Activated B cell treated with CpG ODN at 0.5 μM for 24 hours (primary cell): ENCODE measurements at regions of chr19 and their contacts with region 1.

Region 1: GRCh38 chr19:56314562-56315077 is at the start of gene ZSCAN5A:
- DNase-seq: peak; percentile 93
- ATAC-seq: peak; percentile 77
- H3K4me3 Mint-ChIP-seq: peak within 1 kb of the TSS; percentile 96
- H3K27ac Mint-ChIP-seq: peak within 1 kb of the TSS; percentile 100
- H3K4me1 Mint-ChIP-seq: peaks cover 19% of the 10 kb centered on the region
- H3K27me3 Mint-ChIP-seq: no peaks in the 10 kb centered on the region
- CTCF ChIP-seq: no peak
- total RNA-seq, gene ZSCAN5A: 14.0 and 17.8 TPM in 2 replicates

Region 2: GRCh38 chr19:56080669-56081401 is 233.8 kb before region 1 on chr19:
- CTCF ChIA-PET with region 1: interaction called, 4 read pairs
- POLR2A ChIA-PET with region 1: no interaction called
- intact Hi-C with region 1: loop called (anchors 1 kb)
- DNase-seq: peak; percentile 70
- ATAC-seq: peak; percentile 82
- H3K4me3 Mint-ChIP-seq: peak overlapping the region; percentile 84
- H3K27ac Mint-ChIP-seq: peak overlapping the region; percentile 55
- H3K4me1 Mint-ChIP-seq: peaks cover 17% of the 10 kb centered on the region
- H3K27me3 Mint-ChIP-seq: no peaks in the 10 kb centered on the region
- CTCF ChIP-seq: no peak

Region 3: DNA sequence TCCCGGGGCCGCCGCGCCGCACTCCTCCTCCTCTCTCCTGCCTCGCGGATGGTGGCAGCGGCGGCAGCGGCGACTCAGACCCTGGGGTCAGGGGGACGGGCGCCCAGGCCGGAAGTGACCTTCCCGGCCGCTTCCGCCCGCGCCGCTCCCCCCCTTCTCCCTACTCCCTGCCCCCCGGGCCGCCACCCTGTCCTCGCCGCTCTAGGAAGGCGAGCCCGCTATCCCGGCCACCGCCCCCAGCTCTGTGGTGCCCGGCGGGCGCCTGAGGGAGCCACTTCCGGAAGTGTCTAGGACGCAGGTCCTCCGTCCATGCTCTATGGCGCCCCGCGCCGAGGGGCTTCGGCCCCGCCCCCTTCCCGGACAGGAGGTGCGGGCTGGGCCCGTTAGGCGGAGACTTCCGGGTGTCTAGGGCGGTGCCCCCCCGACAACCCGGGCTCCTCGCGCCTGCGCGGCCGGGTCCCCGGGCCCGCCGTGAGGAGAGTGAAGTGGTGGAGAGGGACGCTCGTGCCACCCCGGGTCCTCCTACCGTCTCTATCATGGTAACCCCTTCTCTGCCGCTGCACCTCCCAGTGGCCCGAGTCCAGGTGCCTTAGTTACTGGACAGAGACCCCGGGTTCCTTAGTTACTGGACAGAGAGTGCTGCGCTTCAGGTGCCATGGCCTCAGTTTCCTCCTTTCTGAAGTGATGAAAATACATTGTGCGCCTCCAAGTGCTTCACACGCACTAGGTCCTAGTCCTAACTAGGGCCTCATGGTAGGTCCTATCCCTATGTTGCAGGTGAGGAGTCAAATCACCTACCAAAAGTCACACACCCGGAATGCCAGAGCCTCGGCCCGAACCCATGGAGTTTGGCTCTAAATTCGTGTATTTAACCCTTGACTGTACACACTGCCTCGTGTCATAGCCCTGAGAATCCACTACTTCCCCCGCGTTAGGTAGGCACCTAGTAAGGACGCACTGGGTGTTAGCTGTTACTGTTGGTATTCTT is 193.1 kb before region 1 on chr19 and contains the start of gene ZNF787:
- CTCF ChIA-PET with region 1: no interaction called
- POLR2A ChIA-PET with region 1: no interaction called
- intact Hi-C with region 1: loop called (anchors 1 kb)
- DNase-seq: peak; percentile 99
- ATAC-seq: peak; percentile 87
- H3K4me3 Mint-ChIP-seq: peak within 1 kb of the TSS; percentile 91
- H3K27ac Mint-ChIP-seq: peak within 1 kb of the TSS; percentile 95
- H3K4me1 Mint-ChIP-seq: peaks cover 45% of the 10 kb centered on the region
- H3K27me3 Mint-ChIP-seq: no peaks in the 10 kb centered on the region
- CTCF ChIP-seq: no peak
- total RNA-seq, gene ZNF787: 40.8 and 42.3 TPM in 2 replicates

Region 4: DNA sequence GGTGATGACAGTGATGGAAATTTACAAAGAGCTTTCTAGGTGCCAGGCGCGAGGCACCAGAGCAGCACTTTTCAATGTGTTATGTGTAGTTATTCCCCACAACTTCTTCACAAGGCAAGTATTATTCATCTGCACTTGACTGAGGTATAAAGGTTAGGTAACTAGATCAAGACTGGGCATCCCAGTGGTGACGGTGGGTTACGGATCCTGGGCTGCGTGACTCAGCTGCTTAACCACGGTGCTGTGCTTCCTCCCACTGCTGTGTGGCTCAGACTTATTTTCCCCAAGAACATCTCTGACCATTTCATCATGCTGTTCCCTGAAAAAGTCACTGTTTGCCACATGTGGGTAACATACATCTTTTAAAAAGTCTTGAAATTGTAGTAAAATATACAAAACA is 22.8 kb before region 1 on chr19:
- CTCF ChIA-PET with region 1: no interaction called
- POLR2A ChIA-PET with region 1: no interaction called
- intact Hi-C with region 1: no loop called
- DNase-seq: no peak
- ATAC-seq: no peak
- H3K4me3 Mint-ChIP-seq: no peak overlapping the region
- H3K27ac Mint-ChIP-seq: no peak overlapping the region
- H3K4me1 Mint-ChIP-seq: no peaks in the 10 kb centered on the region
- H3K27me3 Mint-ChIP-seq: no peaks in the 10 kb centered on the region
- CTCF ChIP-seq: no peak

Region 5: GRCh38 chr19:56367829-56368711 is 53.5 kb after region 1 on chr19:
- CTCF ChIA-PET with region 1: no interaction called
- POLR2A ChIA-PET with region 1: interaction called, 10 read pairs
- intact Hi-C with region 1: no loop called
- DNase-seq: peak; percentile 79
- ATAC-seq: peak; percentile 99
- H3K4me3 Mint-ChIP-seq: peak overlapping the region; percentile 95
- H3K27ac Mint-ChIP-seq: peak overlapping the region; percentile 89
- H3K4me1 Mint-ChIP-seq: peaks cover 23% of the 10 kb centered on the region
- H3K27me3 Mint-ChIP-seq: no peaks in the 10 kb centered on the region
- CTCF ChIP-seq: no peak

Region 6: GRCh38 chr19:56567274-56568120 is 252.9 kb after region 1 on chr19 and contains the start of gene ZNF470:
- CTCF ChIA-PET with region 1: no interaction called
- POLR2A ChIA-PET with region 1: no interaction called
- intact Hi-C with region 1: loop called (anchors 1 kb)
- DNase-seq: peak; percentile 86
- ATAC-seq: peak; percentile 98
- H3K4me3 Mint-ChIP-seq: peak within 1 kb of the TSS; percentile 96
- H3K27ac Mint-ChIP-seq: peak within 1 kb of the TSS; percentile 88
- H3K4me1 Mint-ChIP-seq: peaks cover 15% of the 10 kb centered on the region
- H3K27me3 Mint-ChIP-seq: no peaks in the 10 kb centered on the region
- CTCF ChIP-seq: no peak
- total RNA-seq, gene ZNF470: 5.9 and 6.4 TPM in 2 replicates